ENCODE measurements at regions of chrX and their contacts with region 1.

Region 1: GRCh38 chrX:19904778-19905367 is 17.5 kb upstream of the SH3KBP1 start:
- DNase-seq: peak in 1 of 3 donors; percentile 26
- ATAC-seq: peak; percentile 78
- H3K4me3 ChIP-seq: no peak overlapping the region
- H3K4me1 ChIP-seq: no peaks in the 10 kb centered on the region
- CTCF ChIP-seq: peak; percentile 49

Region 2: GRCh38 chrX:19512359-19512758 is 392.5 kb before region 1 on chrX:
- intact Hi-C with region 1: no loop called
- DNase-seq: no peak
- ATAC-seq: no peak
- H3K4me3 ChIP-seq: no peak overlapping the region
- H3K4me1 ChIP-seq: no peaks in the 10 kb centered on the region
- CTCF ChIP-seq: no peak

Region 3: GRCh38 chrX:19544693-19545305 is 360.1 kb before region 1 on chrX:
- intact Hi-C with region 1: loop called in 1 of 2 experiments (anchors 10 kb)
- DNase-seq: peak in 1 of 3 donors; percentile 73
- ATAC-seq: peak; percentile 81
- H3K4me3 ChIP-seq: no peak overlapping the region
- H3K4me1 ChIP-seq: no peaks in the 10 kb centered on the region
- CTCF ChIP-seq: no peak

Region 4: GRCh38 chrX:19824603-19825002 is 80.3 kb before region 1 on chrX:
- intact Hi-C with region 1: no loop called
- DNase-seq: no peak
- ATAC-seq: no peak
- H3K4me3 ChIP-seq: no peak overlapping the region
- H3K4me1 ChIP-seq: no peaks in the 10 kb centered on the region
- CTCF ChIP-seq: no peak

Region 5: GRCh38 chrX:19990556-19991349 is 85.9 kb after region 1 on chrX and contains the start of gene BCLAF3:
- intact Hi-C with region 1: loop called in 1 of 2 experiments (anchors 5 kb)
- DNase-seq: peak; percentile 88 to 93 (median 92)
- ATAC-seq: peak; percentile 99
- H3K4me3 ChIP-seq: peak within 1 kb of the TSS; percentile 50
- H3K4me1 ChIP-seq: no peaks in the 10 kb centered on the region
- CTCF ChIP-seq: peak; percentile 67
- total RNA-seq, gene BCLAF3: 18.1 to 28.5 (median 20.0) TPM

Measured in mucosa of descending colon (tissue), 3 donors.